ENCODE measurements at regions of chr14 and their contacts with region 1.

Region 1: GRCh38 chr14:72893636-72894321 is at the start of gene DPF3:
- DNase-seq: peak; percentile 94 to 95
- H3K4me3 ChIP-seq: peak within 1 kb of the TSS; percentile 56
- H3K4me3 Mint-ChIP-seq: peak within 1 kb of the TSS; percentile 74
- H3K27ac Mint-ChIP-seq: no peak within 1 kb of the TSS
- H3K4me1 ChIP-seq: peaks cover 15% of the 10 kb centered on the region
- H3K4me1 Mint-ChIP-seq: no peaks in the 10 kb centered on the region
- H3K27me3 ChIP-seq: peaks cover 10% of the 10 kb centered on the region
- H3K27me3 Mint-ChIP-seq: peaks cover 14% of the 10 kb centered on the region
- CTCF ChIP-seq: no peak
- total RNA-seq, gene DPF3: not detected in 2 replicates

Region 2: GRCh38 chr14:72516936-72517700 is 376.7 kb before region 1 on chr14:
- CTCF ChIA-PET with region 1: interaction called, 17 read pairs
- POLR2A ChIA-PET with region 1: no interaction called
- intact Hi-C with region 1: no loop called
- DNase-seq: peak; percentile 62 to 68
- H3K4me3 ChIP-seq: no peak overlapping the region
- H3K4me3 Mint-ChIP-seq: no peak overlapping the region
- H3K27ac Mint-ChIP-seq: no peak overlapping the region
- H3K4me1 ChIP-seq: no peaks in the 10 kb centered on the region
- H3K4me1 Mint-ChIP-seq: no peaks in the 10 kb centered on the region
- H3K27me3 ChIP-seq: no peaks in the 10 kb centered on the region
- H3K27me3 Mint-ChIP-seq: peaks cover 10% of the 10 kb centered on the region
- CTCF ChIP-seq: peak; percentile 74 to 76

Region 3: DNA sequence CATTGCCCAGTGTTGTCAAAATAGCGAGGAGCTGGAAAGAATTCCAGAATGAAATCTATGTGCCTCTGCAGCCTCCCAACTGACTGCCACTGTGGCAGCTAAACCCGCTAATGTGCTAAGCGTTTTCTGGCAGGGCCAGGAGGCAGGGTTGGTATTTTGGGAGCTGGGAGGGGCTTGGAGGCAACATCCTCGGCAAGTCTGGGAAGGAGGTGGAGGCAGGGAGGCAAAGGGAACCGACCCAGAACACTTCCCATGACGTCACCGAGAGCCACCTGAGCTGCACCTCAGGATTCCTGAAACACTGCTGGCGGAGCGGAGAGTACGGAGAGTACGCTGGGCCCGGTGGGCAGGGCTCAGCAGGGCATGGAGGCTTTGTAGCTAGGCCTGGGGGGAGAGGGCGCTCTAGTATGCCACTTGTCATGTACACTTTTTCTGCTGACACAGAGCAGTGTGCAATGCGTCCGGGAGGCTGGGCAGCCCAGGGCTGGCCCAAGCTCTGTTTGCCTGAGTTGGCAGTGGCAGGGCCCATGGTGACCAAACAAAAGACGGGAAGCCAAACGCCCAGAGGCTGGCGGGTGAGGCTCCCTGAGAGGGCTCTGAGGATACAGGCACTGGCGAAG is 81.4 kb before region 1 on chr14:
- CTCF ChIA-PET with region 1: no interaction called
- POLR2A ChIA-PET with region 1: no interaction called
- intact Hi-C with region 1: no loop called
- DNase-seq: no peak
- H3K4me3 ChIP-seq: no peak overlapping the region
- H3K4me3 Mint-ChIP-seq: no peak overlapping the region
- H3K27ac Mint-ChIP-seq: no peak overlapping the region
- H3K4me1 ChIP-seq: no peaks in the 10 kb centered on the region
- H3K4me1 Mint-ChIP-seq: no peaks in the 10 kb centered on the region
- H3K27me3 ChIP-seq: no peaks in the 10 kb centered on the region
- H3K27me3 Mint-ChIP-seq: peaks cover 10% of the 10 kb centered on the region
- CTCF ChIP-seq: no peak

Region 4: DNA sequence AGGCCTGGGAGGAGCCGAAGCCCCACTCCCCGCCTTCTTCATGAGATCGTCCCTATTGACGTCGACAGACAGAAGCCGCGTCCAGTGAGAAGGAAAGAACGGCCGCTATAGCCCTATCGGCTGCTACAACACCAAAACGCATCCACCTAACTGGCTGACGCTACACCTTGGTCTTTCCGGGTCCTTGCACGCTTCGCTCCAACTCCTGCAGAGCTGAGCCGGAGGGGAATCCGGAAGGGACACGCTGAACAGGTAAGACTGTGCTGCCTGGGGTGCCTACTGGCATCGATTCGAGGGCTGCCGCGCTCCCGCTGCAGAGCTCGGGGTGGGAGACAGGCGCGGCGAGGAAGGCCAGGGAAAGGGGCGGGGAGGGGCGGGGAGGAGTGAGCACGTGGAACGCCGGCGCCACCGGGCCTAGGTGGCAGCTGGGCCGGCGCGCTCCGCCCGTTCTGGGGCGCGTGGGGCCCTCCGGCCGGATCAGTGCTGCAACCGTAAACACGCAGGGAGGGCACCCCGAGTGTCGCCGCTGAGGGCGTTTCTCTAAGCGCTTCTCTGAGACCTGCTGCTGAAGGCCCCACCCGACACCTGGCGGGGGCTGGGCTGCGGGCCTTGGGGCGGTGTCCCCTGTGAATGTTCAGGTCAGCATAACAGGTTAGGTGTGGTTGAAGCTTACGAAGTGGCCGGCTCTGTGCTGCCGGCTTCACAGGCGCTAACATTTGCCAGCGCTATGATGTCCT is 32.7 kb after region 1 on chr14 and contains the start of gene DCAF4:
- CTCF ChIA-PET with region 1: no interaction called
- POLR2A ChIA-PET with region 1: no interaction called
- intact Hi-C with region 1: loop called (anchors 1 kb)
- DNase-seq: peak; percentile 97 to 99
- H3K4me3 ChIP-seq: peak within 1 kb of the TSS; percentile 78
- H3K4me3 Mint-ChIP-seq: peak within 1 kb of the TSS; percentile 87
- H3K27ac Mint-ChIP-seq: peak within 1 kb of the TSS; percentile 67
- H3K4me1 ChIP-seq: no peaks in the 10 kb centered on the region
- H3K4me1 Mint-ChIP-seq: no peaks in the 10 kb centered on the region
- H3K27me3 ChIP-seq: no peaks in the 10 kb centered on the region
- H3K27me3 Mint-ChIP-seq: peaks cover 6% of the 10 kb centered on the region
- CTCF ChIP-seq: no peak
- total RNA-seq, gene DCAF4: 20.1 and 21.1 TPM in 2 replicates